Posterior vena cava (tissue), 2 donors: ENCODE measurements at regions of chr9 and their contacts with region 1.

Region 1: DNA sequence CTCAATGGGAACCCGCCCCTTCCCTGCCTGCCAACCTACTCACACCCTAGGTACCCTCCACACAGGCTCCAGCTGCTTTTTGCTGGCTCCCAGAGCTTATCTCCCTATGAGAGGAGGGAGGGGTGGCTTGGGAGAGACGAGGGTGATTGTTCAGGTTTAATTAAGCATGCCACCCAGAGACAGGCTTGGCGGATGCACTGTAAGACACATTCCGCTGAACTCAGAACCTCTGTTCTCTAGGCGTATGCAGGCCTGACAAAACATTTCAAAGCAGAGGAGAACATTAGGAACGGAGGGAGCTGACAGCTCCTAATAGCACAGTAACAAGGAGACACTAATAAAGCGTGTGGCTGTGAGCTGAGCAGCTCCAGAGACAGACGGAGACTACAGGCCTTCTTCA is 80.1 kb downstream of the TRIM32 start:
- DNase-seq: no peak

Region 2: GRCh38 chr9:115132648-115133047 is 1634.6 kb before region 1 on chr9:
- intact Hi-C with region 1: no loop called
- DNase-seq: no peak

Region 3: DNA sequence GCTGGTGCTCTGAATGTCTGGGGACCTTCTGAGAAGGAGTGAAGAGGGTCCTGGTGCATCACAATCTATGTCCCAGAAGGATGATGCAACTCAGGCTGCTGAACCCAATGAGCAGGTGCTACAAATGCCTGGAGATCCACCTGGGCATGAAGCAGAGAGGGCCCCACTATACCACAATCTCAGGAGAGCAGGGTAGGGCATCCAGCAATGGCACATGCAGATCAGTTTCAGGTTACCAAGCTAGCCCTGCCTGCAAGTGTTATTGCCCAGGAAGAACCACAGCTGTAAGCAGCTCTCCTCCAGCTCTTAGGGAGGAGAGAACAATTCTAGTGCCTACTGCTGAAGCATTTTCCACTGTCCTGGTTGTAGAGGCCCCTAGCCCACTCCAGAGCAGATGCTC is 1260.1 kb before region 1 on chr9:
- intact Hi-C with region 1: no loop called
- DNase-seq: no peak

Region 4: GRCh38 chr9:116842658-116843057 is 75.4 kb after region 1 on chr9:
- intact Hi-C with region 1: loop called in 1 of 2 experiments (anchors 2 kb)
- DNase-seq: no peak